Activated CD4-positive, alpha-beta memory T cell treated with anti-CD3 and anti-CD28 coated beads for 36 hours (primary cell): ENCODE measurements at regions of chr17 and their contacts with region 1.

Region 1: GRCh38 chr17:63741221-63742049 is at the start of gene STRADA:
- DNase-seq: peak; percentile 100
- H3K4me3 Mint-ChIP-seq: peak within 1 kb of the TSS; percentile 91
- H3K27ac Mint-ChIP-seq: peak within 1 kb of the TSS; percentile 98
- H3K4me1 Mint-ChIP-seq: peaks cover 23% of the 10 kb centered on the region
- H3K27me3 Mint-ChIP-seq: no peaks in the 10 kb centered on the region
- total RNA-seq, gene STRADA: 64.8 to 69.7 TPM

Region 2: GRCh38 chr17:63621766-63622519 is 119.5 kb before region 1 on chr17 and contains the start of gene MAP3K3:
- CTCF ChIA-PET with region 1: interaction called, 3 read pairs
- POLR2A ChIA-PET with region 1: interaction called, 6 read pairs
- intact Hi-C with region 1: loop called (anchors 1 kb)
- DNase-seq: peak; percentile 99
- H3K4me3 Mint-ChIP-seq: peak within 1 kb of the TSS; percentile 99
- H3K27ac Mint-ChIP-seq: peak within 1 kb of the TSS; percentile 87
- H3K4me1 Mint-ChIP-seq: peaks cover 38% of the 10 kb centered on the region
- H3K27me3 Mint-ChIP-seq: no peaks in the 10 kb centered on the region
- total RNA-seq, gene MAP3K3: 32.8 to 34.0 TPM

Region 3: GRCh38 chr17:63688396-63689020 is 52.9 kb before region 1 on chr17:
- CTCF ChIA-PET with region 1: no interaction called
- POLR2A ChIA-PET with region 1: no interaction called
- intact Hi-C with region 1: no loop called
- DNase-seq: peak; percentile 41
- H3K4me3 Mint-ChIP-seq: no peak overlapping the region
- H3K27ac Mint-ChIP-seq: peak overlapping the region; percentile 65
- H3K4me1 Mint-ChIP-seq: peaks cover 22% of the 10 kb centered on the region
- H3K27me3 Mint-ChIP-seq: no peaks in the 10 kb centered on the region

Region 4: GRCh38 chr17:63827002-63827771 is 85.8 kb after region 1 on chr17 and contains the starts of genes FTSJ3 and PSMC5:
- CTCF ChIA-PET with region 1: no interaction called
- POLR2A ChIA-PET with region 1: interaction called, 5 read pairs
- intact Hi-C with region 1: loop called (anchors 1 kb)
- DNase-seq: peak; percentile 97
- H3K4me3 Mint-ChIP-seq: peak within 1 kb of the TSS; percentile 94
- H3K27ac Mint-ChIP-seq: peak within 1 kb of the TSS; percentile 98
- H3K4me1 Mint-ChIP-seq: peaks cover 75% of the 10 kb centered on the region
- H3K27me3 Mint-ChIP-seq: no peaks in the 10 kb centered on the region
- total RNA-seq, gene FTSJ3: 41.5 to 42.8 TPM
- total RNA-seq, gene PSMC5: 165 to 171 TPM

Region 5: DNA sequence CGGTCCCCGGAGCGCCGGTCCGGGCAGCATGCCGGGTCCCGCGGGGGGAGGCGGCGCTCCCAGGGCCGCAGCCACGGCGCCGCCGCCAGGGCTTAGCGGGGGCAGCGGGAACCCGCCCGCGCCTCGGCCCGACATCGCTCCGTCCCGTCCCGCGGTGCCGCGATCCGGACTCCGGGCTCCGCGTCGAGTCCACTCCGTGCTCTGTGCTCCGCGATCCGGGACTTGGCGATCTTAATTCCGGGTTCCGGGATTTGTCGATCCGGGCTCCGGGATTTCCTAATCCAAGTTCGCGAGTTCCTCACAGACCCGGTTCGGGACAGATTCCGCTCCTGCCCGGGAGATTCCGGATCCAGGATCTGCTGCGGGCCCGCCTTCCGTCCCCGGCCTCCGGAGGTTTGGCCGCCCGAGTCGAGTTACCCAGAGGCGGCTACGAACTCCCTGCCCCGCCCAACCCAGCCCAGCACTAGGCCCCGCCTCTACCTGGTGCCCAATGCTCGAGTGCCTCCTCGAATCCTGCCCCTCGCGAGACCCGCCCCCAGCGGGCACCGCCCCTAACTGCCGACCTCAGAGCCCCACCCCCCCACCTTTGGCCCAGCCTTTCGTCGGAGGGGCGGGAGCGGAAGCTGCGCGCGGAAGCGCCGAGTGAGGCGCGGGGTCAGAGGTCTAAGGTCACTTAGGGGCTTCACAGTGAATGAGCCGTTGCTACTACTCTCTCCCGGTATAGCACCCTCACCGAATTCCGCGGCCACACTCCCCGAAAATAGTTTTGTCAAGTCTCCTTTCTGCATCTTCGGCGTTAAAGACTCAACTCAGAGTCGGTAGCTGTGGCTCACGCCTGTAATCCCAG is 101.3 kb after region 1 on chr17 and contains the start of gene SMARCD2:
- CTCF ChIA-PET with region 1: no interaction called
- POLR2A ChIA-PET with region 1: interaction called, 5 read pairs
- intact Hi-C with region 1: loop called (anchors 2 kb)
- DNase-seq: peak; percentile 100
- H3K4me3 Mint-ChIP-seq: peak within 1 kb of the TSS; percentile 95
- H3K27ac Mint-ChIP-seq: peak within 1 kb of the TSS; percentile 95
- H3K4me1 Mint-ChIP-seq: peaks cover 34% of the 10 kb centered on the region
- H3K27me3 Mint-ChIP-seq: no peaks in the 10 kb centered on the region
- total RNA-seq, gene SMARCD2: 109 to 111 TPM

Region 6: DNA sequence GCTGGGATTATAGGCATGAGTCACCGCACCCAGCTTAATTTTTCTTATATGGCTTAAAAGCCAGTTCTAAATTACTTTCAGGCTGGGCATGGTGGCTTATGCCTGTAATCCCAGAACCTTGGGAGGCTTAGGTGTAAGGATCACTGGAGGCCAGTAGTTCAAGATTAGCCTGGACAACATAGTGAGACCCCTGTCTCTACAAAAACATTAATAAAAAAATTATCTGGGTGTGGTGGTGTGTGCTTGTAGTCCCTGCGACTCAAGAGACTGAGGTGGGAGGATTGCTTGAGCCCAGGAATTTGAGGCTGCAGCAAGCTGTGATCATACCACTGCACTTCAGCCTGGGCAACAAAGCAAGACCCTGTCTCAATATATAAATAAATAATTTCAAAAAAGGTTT is 111.8 kb after region 1 on chr17:
- CTCF ChIA-PET with region 1: no interaction called
- POLR2A ChIA-PET with region 1: no interaction called
- intact Hi-C with region 1: no loop called
- DNase-seq: no peak
- H3K4me3 Mint-ChIP-seq: no peak overlapping the region
- H3K27ac Mint-ChIP-seq: no peak overlapping the region
- H3K4me1 Mint-ChIP-seq: peaks cover 7% of the 10 kb centered on the region
- H3K27me3 Mint-ChIP-seq: no peaks in the 10 kb centered on the region